ENCODE measurements at regions of chr10 and their contacts with region 1.

Region 1: DNA sequence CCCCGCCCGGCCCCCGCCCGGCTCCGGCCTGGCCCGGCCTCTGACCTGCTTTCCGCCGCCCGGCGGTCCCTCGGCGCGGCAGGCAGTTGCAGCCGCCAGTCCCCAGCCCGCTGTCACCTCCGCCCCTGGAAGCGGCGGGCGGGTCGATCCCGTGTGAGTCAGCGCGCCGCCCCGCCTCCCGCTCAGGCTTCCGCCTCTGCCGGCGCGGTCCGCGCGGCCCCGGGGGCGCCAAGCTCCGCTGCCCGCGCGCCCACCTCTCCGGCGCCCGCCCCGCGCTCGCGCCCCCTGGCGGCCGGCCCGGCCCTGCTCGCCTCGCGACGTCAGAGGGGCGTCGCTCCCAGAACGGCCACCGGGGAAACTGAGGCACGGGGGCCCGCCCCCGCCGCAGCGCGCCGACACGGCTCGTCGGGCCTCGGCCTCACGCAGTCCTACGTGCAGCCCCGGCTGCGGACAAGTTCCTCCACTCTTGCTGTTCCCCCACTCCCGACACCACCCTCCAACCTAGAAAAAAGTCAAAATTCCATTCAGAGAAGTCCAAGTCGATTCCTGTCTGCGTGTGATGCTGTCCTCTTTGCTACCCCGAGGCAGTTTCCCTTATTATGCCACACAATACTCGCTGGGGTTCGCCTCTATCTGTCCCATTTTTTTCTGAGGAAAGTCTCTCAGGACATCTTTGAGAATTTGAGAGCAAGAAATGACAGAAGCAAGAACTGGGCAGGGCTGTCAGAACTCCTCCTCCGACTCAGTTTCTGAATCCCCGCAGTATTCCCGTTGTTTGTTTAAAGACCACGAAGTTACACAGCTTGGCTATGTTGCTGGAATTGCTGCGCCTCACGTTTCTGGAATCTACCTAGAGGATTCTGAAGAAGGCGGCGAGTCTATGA is at the start of gene DNMBP:
- DNase-seq: peak; percentile 79
- ATAC-seq: peak; percentile 64
- H3K4me3 ChIP-seq: peak within 1 kb of the TSS; percentile 91
- H3K27ac ChIP-seq: peak within 1 kb of the TSS; percentile 95
- H3K4me1 ChIP-seq: peaks cover 27% of the 10 kb centered on the region
- H3K27me3 ChIP-seq: no peaks in the 10 kb centered on the region
- CTCF ChIP-seq: peak; percentile 45; the same call in 1 of the 2 replicates
- total RNA-seq, gene DNMBP: 6.2 and 8.1 TPM in 2 replicates

Region 2: DNA sequence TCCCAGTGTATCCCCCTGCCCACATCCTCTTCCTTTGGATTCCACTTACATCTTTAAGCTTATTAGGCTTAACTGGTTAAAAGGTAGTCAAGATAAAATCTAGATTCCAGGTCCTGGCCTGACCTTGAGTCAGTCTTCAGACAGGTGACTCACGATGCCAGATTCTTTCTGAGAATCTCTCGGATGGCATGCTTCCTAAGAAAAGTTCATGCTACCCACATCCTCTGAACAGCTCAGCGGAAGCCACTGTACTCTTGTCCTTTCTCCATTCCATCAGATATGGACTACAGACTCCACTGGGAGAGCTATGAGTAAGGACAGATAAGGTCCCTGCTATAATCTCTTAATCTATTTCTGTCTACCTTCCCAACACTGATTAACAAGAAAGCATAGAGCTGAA is 43.7 kb before region 1 on chr10:
- CTCF ChIA-PET with region 1: no interaction called
- POLR2A ChIA-PET with region 1: no interaction called
- intact Hi-C with region 1: loop called (anchors 5 kb)
- DNase-seq: peak; percentile 95
- ATAC-seq: peak; percentile 91
- H3K4me3 ChIP-seq: no peak overlapping the region
- H3K27ac ChIP-seq: peak overlapping the region; percentile 93
- H3K4me1 ChIP-seq: peaks cover 28% of the 10 kb centered on the region
- H3K27me3 ChIP-seq: no peaks in the 10 kb centered on the region
- CTCF ChIP-seq: no peak

Region 3: GRCh38 chr10:99976886-99977665 is 33.0 kb before region 1 on chr10:
- CTCF ChIA-PET with region 1: interaction called, 3 read pairs
- POLR2A ChIA-PET with region 1: no interaction called
- intact Hi-C with region 1: loop called (anchors 2 kb)
- DNase-seq: peak; percentile 86
- ATAC-seq: peak; percentile 96
- H3K4me3 ChIP-seq: no peak overlapping the region
- H3K27ac ChIP-seq: peak overlapping the region; percentile 79
- H3K4me1 ChIP-seq: peaks cover 19% of the 10 kb centered on the region
- H3K27me3 ChIP-seq: no peaks in the 10 kb centered on the region
- CTCF ChIP-seq: no peak

Region 4: DNA sequence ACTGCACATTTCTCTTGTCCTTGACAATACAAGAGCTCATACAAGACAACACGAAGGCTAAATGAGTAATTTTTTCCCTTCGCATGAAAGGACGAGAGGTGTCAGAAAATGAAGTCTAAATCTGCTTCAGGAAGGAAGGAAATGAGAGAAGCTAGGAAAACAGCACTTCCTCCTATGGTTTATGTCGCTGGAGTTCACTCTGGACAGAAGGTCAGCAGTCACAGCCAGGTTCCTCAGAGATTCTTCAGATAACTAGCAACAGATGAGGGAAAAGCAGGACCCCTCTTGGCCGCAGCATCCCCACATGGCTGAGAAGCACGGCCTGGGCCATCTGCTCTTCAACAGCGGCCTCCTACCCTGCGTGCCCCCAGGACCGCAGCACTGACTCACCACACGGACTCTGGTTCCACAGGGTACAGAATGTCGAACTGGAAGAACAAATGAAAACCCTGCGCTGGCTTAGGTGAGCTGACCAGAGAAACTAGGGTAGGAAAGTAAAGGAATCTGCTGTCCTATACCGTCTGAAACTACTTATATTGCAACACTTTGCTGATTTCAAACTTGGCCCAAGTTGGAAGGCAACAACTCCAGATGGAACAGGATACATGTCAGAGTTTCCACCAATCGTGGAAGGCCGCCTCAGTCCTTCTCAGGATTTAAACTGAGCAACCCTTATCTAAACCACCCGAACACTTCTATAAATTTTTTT is 26.6 kb before region 1 on chr10:
- CTCF ChIA-PET with region 1: interaction called, 10 read pairs
- POLR2A ChIA-PET with region 1: interaction called, 3 read pairs
- intact Hi-C with region 1: no loop called
- DNase-seq: no peak
- ATAC-seq: no peak; the same call in 1 of the 2 replicates
- H3K4me3 ChIP-seq: no peak overlapping the region
- H3K27ac ChIP-seq: peak overlapping the region; percentile 60
- H3K4me1 ChIP-seq: peaks cover 16% of the 10 kb centered on the region
- H3K27me3 ChIP-seq: no peaks in the 10 kb centered on the region
- CTCF ChIP-seq: no peak

Region 5: GRCh38 chr10:100046021-100046486 is 36.0 kb after region 1 on chr10:
- CTCF ChIA-PET with region 1: interaction called, 3 read pairs
- POLR2A ChIA-PET with region 1: no interaction called
- intact Hi-C with region 1: loop called (anchors 1 kb)
- DNase-seq: peak; percentile 81
- ATAC-seq: peak; percentile 92
- H3K4me3 ChIP-seq: no peak overlapping the region
- H3K27ac ChIP-seq: no peak overlapping the region
- H3K4me1 ChIP-seq: 0 out of 2 replicates have a peak, but pooled peaks cover 7% of the 10 kb centered on the region
- H3K27me3 ChIP-seq: no peaks in the 10 kb centered on the region
- CTCF ChIP-seq: peak; percentile 81